ENCODE measurements at regions of chr5 and their contacts with region 1.

Region 1: DNA sequence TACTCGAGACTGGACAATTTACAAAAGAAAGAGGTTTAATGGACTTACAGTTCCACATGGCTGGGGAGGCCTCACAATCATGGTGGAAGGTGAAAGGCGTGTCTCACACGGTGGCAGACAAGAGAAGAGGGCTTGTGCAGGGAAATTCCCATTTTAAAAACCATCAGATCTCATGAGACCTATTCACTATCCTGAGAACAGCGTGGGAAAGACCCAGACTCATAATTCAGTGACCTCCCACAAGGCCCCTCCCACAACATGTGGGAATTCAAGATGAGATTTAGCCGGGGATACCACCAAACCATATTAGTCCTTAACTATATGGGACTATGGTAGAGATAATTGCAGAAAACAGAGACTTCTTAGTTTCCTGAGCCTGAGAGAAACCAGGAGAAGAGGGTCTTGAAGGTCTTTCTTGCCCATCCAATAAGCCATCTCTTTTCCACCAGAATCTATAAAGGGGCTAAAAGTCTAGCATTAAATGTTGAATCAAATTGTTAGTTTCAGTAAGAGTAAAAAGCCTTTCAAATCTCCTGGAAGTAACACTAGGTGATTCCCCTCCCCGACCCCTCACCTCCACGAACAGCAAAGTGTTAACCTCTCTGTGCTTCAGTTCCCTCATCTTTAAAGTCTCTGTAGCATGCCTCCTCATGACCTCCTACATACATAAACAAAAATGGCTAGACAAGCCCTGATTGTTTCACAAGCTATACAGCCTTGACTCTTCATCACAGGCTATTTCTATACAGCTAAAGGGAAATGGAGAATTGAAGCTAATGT is 259.1 kb downstream of the TMEM167A start:
- DNase-seq: no peak
- H3K4me3 ChIP-seq: no peak overlapping the region
- H3K27ac ChIP-seq: no peak overlapping the region
- H3K4me1 ChIP-seq: no peaks in the 10 kb centered on the region
- H3K27me3 ChIP-seq: no peaks in the 10 kb centered on the region
- CTCF ChIP-seq: no peak
- POLR2A ChIP-seq: no peak

Region 2: DNA sequence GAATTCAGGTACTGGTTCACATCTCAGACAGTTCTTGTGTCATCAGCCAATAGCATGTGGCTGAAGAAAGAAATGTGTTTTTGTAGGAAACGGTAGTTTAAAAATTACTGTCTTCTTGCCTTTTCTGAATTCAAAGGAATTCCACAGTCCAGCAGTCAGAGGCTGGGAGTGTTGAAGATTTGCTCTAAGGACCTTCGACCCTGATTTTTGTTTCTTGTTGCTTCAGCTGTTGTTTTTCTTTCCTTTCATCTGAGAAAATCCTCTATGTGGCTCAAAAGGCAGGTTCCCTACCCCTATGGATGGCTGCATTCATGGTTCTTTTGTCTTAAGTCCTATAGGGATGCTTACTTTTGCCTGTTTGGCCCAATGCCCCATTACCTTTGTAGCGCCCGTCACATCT is 45.8 kb before region 1 on chr5:
- intact Hi-C with region 1: no loop called
- DNase-seq: no peak
- H3K4me3 ChIP-seq: no peak overlapping the region
- H3K27ac ChIP-seq: no peak overlapping the region
- H3K4me1 ChIP-seq: no peaks in the 10 kb centered on the region
- H3K27me3 ChIP-seq: no peaks in the 10 kb centered on the region
- CTCF ChIP-seq: no peak
- POLR2A ChIP-seq: no peak

Region 3: DNA sequence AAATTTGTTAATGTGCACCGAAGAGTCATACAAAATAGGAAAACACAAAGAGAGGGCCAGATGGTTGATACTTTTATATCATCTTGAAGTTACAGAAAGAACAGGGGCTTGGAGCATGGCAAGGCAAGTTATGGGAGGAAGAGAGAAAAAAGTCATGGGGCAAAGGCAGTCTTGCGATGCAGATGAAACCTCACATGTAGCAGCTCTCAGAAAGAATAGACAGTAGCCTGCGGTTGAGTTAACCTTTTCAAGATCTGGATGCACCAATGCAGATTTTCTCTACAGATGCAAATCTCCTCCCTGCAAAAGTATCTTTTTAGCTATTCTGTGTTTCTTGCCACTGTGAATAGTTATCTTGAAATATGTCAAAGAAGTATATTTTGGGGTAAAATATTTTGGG is 15.2 kb after region 1 on chr5:
- intact Hi-C with region 1: loop called (anchors 2 kb)
- DNase-seq: no peak
- H3K4me3 ChIP-seq: no peak overlapping the region
- H3K27ac ChIP-seq: no peak overlapping the region
- H3K4me1 ChIP-seq: no peaks in the 10 kb centered on the region
- H3K27me3 ChIP-seq: no peaks in the 10 kb centered on the region
- CTCF ChIP-seq: no peak
- POLR2A ChIP-seq: no peak